ENCODE measurements at regions of chr2 and their contacts with region 1.

Region 1: GRCh38 chr2:109654326-109655050 is 40.3 kb downstream of the SOWAHC start:
- DNase-seq: no peak
- H3K4me3 ChIP-seq: no peak overlapping the region
- H3K27ac ChIP-seq: no peak overlapping the region
- H3K4me1 ChIP-seq: peaks cover 0 to 13% (median 2%) of the 10 kb centered on the region in 4 donors
- H3K27me3 ChIP-seq: no peaks in the 10 kb centered on the region
- CTCF ChIP-seq: no peak

Region 2: DNA sequence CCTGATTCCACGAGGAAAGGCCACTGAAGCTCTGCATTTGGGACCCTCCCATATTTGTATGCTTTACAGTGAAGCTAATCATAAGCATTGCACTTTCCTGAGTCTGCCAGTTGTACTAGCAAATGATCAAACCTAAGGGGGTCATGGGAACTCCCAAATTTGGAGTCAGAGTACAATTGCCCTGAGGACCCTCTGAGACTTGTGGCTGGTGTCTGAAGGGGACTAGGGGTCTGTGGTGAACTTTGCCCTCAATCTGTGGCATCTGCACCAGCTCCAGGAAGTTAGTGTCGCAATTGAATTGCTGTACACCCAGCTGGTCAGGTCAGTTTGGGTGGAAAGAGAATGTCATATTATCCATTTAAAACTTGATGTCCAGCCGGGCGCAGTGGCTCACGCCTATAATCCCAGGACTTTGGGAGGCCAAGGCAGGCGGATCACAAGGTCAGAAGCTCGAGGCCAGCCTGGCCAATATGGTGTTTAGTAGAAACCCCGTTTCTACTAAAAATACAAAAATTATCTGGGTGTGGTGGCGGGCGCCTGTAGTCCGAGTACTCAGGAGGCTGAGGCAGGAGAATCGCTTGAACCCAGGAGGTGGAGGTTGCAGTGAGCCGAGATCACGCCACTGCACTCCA is 22.2 kb before region 1 on chr2:
- intact Hi-C with region 1: loop called (anchors 2 kb)
- DNase-seq: no peak
- H3K4me3 ChIP-seq: no peak overlapping the region
- H3K27ac ChIP-seq: no peak overlapping the region
- H3K4me1 ChIP-seq: no peaks in the 10 kb centered on the region
- H3K27me3 ChIP-seq: no peaks in the 10 kb centered on the region
- CTCF ChIP-seq: no peak

Measured in tibial artery (tissue), 4 donors.